SK-N-SH (cell line): ENCODE measurements at regions of chr16 and their contacts with region 1.

Region 1: DNA sequence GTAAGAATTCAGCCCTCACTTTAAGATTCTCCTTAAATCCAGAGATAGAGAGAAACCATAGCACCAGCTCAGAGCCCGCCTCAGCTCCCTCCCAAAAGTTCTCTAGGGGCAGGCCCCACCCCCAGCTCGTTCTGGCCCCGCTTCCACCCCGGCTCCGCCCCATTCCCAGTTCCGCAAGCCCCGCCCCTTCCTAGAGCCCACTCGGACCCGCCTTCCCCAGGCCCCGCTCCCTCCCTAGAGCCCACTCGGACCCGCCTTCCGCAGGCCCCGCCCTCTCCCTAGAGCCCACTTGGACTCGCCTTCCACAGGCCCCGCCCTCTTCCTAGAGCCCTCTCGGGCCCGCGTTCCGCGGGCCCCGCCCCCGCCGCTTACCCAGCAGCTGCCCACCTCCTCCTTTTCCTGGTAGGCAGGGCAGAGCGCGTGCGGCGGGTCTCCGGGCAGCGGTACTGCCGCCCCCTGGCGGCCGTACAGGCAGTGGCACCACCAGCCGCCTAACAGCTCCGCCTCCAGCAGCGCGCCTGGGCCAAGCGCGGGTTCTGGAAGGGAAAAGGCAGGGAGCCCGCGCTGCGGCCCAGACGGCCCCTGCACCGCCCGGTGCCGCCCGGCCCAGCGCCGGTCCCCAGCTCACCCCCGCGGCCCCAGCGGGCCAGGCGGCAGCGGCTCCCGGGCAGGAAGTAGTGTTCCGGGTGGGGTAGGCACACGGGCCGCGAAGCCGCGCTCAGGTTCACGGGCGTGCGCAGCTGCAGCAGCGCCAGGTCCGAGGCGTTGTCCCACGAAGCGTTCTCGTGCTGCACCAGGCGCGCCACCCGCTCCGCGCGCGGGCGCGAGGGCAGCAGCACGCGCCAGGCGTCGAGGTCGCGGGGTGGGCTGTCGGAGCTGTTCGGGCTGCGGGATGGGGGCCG is 6.8 kb upstream of the PRSS8 start:
- DNase-seq: peak; percentile 100
- H3K4me3 ChIP-seq: peak overlapping the region; percentile 46 to 62
- H3K27ac ChIP-seq: peak overlapping the region; percentile 62 to 78
- H3K4me1 ChIP-seq: peaks cover 12 to 22% of the 10 kb centered on the region in 2 experiments; a peak in 2 of 4 replicates
- H3K27me3 ChIP-seq: no peaks in the 10 kb centered on the region
- CTCF ChIP-seq: peak; percentile 80
- EP300 ChIP-seq: no peak
- RAD21 ChIP-seq: peak; percentile 74

Region 2: DNA sequence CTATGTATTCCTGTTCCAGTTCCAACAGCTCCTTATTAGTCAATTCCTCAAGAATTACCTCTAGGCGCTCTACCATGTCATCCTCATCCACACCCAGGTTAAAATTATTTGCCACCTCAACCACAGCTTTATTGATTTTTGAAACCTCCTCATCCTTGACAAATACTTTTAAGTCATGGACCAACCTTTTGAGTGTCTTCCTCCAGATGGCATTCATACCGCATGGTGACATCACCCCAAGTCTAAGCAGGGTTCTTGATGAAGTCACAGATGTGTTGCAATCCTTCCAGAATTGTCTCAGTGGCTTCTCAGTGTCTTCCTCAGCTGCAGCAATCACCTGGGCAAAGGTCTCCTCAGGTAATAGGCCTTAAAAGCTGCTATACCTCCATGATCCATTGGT is 288.6 kb before region 1 on chr16:
- CTCF ChIA-PET with region 1: no interaction called
- POLR2A ChIA-PET with region 1: no interaction called
- DNase-seq: no peak
- H3K4me3 ChIP-seq: no peak overlapping the region
- H3K27ac ChIP-seq: no peak overlapping the region
- H3K4me1 ChIP-seq: no peaks in the 10 kb centered on the region
- H3K27me3 ChIP-seq: no peaks in the 10 kb centered on the region
- CTCF ChIP-seq: no peak
- EP300 ChIP-seq: no peak
- RAD21 ChIP-seq: no peak

Region 3: DNA sequence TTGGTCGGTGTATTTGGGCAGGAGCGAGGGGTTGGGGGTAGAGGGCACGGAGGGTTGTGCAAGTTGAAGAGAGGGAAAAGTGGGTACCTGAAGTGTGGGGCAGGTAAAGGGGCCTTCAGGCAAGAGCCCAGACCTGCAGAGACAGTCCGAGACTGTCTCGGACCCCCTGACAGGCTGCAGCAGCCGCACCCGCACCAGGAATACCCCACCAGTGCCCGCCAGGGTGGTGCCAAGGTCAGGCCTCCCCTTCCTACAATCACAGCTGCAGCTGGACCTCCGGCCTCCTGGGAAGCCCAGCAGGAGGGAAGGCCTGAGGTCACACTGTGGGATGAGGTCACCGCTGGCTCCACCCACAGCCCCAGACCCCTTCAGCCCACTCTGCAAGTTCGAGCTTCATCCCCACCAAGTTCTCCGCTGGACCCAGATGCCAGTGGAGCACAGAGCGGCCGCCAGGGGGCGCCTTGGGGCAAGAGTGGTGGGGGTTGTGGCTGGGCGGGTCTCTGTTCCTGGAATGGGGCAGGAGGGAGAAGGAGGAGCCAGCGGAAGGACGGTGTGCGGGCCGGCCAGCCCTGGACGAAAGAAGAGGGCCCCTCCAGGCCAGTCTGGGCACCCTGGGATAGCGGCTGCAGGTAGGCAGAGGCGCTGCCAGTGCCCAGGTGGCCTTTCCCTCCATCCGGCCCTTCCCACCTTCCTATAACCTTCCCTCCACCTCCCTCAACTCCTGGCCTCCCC is 157.5 kb before region 1 on chr16 and contains the start of gene HSD3B7:
- CTCF ChIA-PET with region 1: interaction called, 38 read pairs
- POLR2A ChIA-PET with region 1: interaction called, 3 read pairs
- DNase-seq: peak; percentile 98
- H3K4me3 ChIP-seq: peak within 1 kb of the TSS; percentile 31 to 52; a peak in 3 of 4 replicates
- H3K27ac ChIP-seq: peak within 1 kb of the TSS; percentile 19 to 58; a peak in 1 of 4 replicates
- H3K4me1 ChIP-seq: peaks cover 5 to 8% of the 10 kb centered on the region in 2 experiments; a peak in 2 of 4 replicates
- H3K27me3 ChIP-seq: no peaks in the 10 kb centered on the region
- CTCF ChIP-seq: peak; percentile 86
- EP300 ChIP-seq: no peak; a peak in 1 of 4 replicates
- RAD21 ChIP-seq: peak; percentile 81
- polyA plus RNA-seq, gene HSD3B7: 12.2 and 12.9 TPM in 2 replicates

Region 4: GRCh38 chr16:31025339-31025738 is 117.0 kb before region 1 on chr16:
- CTCF ChIA-PET with region 1: no interaction called
- POLR2A ChIA-PET with region 1: no interaction called
- DNase-seq: no peak
- H3K4me3 ChIP-seq: no peak overlapping the region
- H3K27ac ChIP-seq: no peak overlapping the region
- H3K4me1 ChIP-seq: no peaks in the 10 kb centered on the region
- H3K27me3 ChIP-seq: no peaks in the 10 kb centered on the region
- CTCF ChIP-seq: no peak
- EP300 ChIP-seq: no peak
- RAD21 ChIP-seq: no peak

Region 5: DNA sequence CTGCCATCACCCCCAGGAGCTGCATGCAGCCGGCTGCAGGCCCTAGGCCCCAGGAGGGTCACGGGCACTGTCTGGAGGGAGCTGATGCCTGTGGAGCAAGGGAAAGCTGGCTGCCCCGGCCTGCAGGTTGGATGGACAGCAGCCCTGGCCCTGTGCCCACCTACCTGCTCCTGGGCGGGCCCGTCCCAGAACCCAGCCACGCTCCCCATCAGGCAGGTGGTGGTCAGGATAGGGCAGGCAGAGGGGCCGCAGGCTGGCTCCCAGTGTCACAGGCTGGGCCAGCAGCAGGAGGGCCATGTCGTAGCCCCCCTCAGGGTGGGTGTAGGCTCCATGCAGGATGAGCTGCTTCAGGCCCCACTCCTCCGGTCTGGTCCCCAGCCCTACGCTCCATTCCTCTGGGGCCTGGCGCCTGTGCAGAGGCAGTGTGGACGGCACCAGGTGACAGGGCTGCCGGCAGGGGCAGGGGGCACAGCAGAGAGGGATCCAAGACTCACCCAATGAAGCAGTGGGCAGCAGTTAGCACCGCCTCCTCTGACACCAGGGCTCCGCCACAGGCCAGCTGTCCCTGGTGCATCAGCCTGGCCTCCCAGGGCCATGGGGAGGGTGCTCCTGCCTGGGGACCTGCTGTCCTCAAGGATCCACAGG is 57.6 kb before region 1 on chr16:
- CTCF ChIA-PET with region 1: interaction called, 12 read pairs
- POLR2A ChIA-PET with region 1: no interaction called
- DNase-seq: no peak
- H3K4me3 ChIP-seq: no peak overlapping the region
- H3K27ac ChIP-seq: no peak overlapping the region; a peak in 1 of 4 replicates
- H3K4me1 ChIP-seq: no peaks in the 10 kb centered on the region; a peak in 1 of 4 replicates
- H3K27me3 ChIP-seq: no peaks in the 10 kb centered on the region
- CTCF ChIP-seq: no peak
- EP300 ChIP-seq: no peak
- RAD21 ChIP-seq: no peak

Region 6: GRCh38 chr16:31117391-31118197 is 24.8 kb before region 1 on chr16 and contains the start of gene KAT8:
- CTCF ChIA-PET with region 1: interaction called, 30 read pairs
- POLR2A ChIA-PET with region 1: interaction called, 43 read pairs
- DNase-seq: peak; percentile 98
- H3K4me3 ChIP-seq: peak within 1 kb of the TSS; percentile 61 to 95
- H3K27ac ChIP-seq: peak within 1 kb of the TSS; percentile 74 to 83
- H3K4me1 ChIP-seq: peaks cover 6 to 8% of the 10 kb centered on the region in 2 experiments; a peak in 2 of 4 replicates
- H3K27me3 ChIP-seq: no peaks in the 10 kb centered on the region
- CTCF ChIP-seq: no peak
- EP300 ChIP-seq: no peak
- RAD21 ChIP-seq: peak; percentile 12; the same call in 1 of the 2 replicates
- polyA plus RNA-seq, gene KAT8: 51.8 and 52.0 TPM in 2 replicates

Region 7: DNA sequence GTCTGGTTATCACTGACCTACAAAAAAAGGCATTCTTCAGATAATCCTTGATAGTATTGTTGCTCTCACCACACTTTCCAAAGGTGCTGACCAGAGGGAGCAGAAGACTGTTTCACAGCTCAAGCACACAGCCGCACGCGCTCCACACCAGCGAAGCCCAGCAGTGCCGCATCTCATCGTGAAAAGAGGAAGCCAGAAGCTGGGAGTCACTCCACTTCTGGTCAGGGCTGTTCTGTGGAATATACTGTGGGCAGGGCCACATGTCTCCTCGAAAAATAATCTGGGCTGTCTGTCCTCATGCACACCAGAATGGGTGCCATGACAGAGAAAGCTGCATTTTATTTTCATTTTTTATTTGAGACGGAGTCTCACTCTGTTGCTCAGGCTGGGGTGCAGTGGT is 14.8 kb after region 1 on chr16:
- CTCF ChIA-PET with region 1: interaction called, 24 read pairs
- POLR2A ChIA-PET with region 1: interaction called, 3 read pairs
- DNase-seq: no peak
- H3K4me3 ChIP-seq: no peak overlapping the region
- H3K27ac ChIP-seq: no peak overlapping the region
- H3K4me1 ChIP-seq: no peaks in the 10 kb centered on the region
- H3K27me3 ChIP-seq: no peaks in the 10 kb centered on the region
- CTCF ChIP-seq: no peak
- EP300 ChIP-seq: no peak
- RAD21 ChIP-seq: no peak

Region 8: DNA sequence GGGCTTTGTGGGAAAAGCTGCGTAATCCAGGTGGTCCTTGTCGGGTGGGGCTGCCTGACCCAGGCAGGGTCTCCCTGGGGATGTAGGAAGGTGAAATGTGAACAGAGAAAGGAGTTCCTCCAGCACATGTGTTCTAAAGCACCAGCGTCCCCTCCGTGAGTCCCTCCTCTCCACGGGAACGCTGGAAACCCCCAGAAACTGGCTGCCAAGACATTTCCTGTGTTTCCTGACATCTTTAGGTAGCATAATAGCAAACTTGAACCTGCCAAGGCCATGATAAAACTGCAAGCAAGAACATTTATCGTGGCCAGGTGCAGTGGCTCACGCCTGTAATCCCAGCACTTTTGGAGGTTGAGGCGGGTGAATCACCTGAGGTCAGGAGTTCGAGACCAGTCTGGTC is 87.1 kb after region 1 on chr16:
- CTCF ChIA-PET with region 1: no interaction called
- POLR2A ChIA-PET with region 1: no interaction called
- DNase-seq: no peak
- H3K4me3 ChIP-seq: no peak overlapping the region
- H3K27ac ChIP-seq: no peak overlapping the region
- H3K4me1 ChIP-seq: no peaks in the 10 kb centered on the region
- H3K27me3 ChIP-seq: no peaks in the 10 kb centered on the region; the same call in 1 of the 2 replicates
- CTCF ChIP-seq: no peak
- EP300 ChIP-seq: no peak
- RAD21 ChIP-seq: no peak

Region 9: DNA sequence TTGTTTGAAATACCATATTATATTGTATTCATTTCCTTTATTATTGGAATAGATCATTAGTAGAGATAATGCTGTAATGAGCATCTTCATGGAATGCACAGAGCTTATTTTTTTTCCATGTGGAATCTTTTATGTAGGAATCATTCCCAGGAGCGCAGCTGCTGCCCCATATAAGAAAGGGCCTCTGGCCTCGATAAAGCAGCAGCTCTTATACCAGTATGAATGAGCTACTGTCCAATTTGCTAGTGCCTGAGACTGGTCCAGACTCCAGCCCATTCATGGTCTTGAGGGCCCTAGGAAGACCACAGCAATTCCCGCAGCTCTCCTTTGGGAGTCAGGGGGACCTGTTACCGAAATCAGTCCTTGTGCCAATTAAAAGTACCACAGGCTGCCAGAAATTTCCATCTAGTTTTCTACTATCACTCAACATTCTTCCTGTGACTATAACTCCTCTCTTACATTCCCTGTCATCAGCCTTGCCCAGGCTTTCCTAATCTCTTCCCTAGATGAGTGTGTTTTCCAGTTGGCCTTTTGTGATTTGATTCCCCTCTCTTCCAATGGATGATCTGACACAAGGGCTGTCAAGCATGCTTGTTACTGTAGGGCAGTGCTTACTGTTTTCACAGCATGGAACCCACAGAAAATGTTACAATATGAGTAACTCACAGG is 298.3 kb after region 1 on chr16:
- CTCF ChIA-PET with region 1: interaction called, 13 read pairs
- POLR2A ChIA-PET with region 1: no interaction called
- DNase-seq: no peak
- H3K4me3 ChIP-seq: no peak overlapping the region
- H3K27ac ChIP-seq: peak overlapping the region in 1 of 2 experiments; percentile 51; a peak in 1 of 4 replicates
- H3K4me1 ChIP-seq: peaks cover 0 to 5% of the 10 kb centered on the region in 2 experiments; a peak in 1 of 4 replicates
- H3K27me3 ChIP-seq: no peaks in the 10 kb centered on the region
- CTCF ChIP-seq: no peak
- EP300 ChIP-seq: no peak
- RAD21 ChIP-seq: no peak